Testis (tissue), 5 donors: ENCODE measurements at regions of chr19 and their contacts with region 1.

Region 1: GRCh38 chr19:11924886-11925650 is at the start of gene ZNF700:
- DNase-seq: peak; percentile 99
- H3K4me3 ChIP-seq: peak within 1 kb of the TSS; percentile 68 to 72
- H3K27ac ChIP-seq: peak within 1 kb of the TSS; percentile 90 to 91
- H3K4me1 ChIP-seq: peaks cover 21% of the 10 kb centered on the region
- H3K27me3 ChIP-seq: no peaks in the 10 kb centered on the region
- CTCF ChIP-seq: no peak
- POLR2A ChIP-seq: peak; percentile 68
- total RNA-seq, gene ZNF700: 22.0 to 26.1 TPM

Region 2: GRCh38 chr19:11987405-11988281 is 62.6 kb after region 1 on chr19:
- intact Hi-C with region 1: loop called (anchors 10 kb)
- DNase-seq: peak; percentile 98
- H3K4me3 ChIP-seq: peak overlapping the region; percentile 61 to 79
- H3K27ac ChIP-seq: peak overlapping the region; percentile 79 to 83
- H3K4me1 ChIP-seq: no peaks in the 10 kb centered on the region
- H3K27me3 ChIP-seq: no peaks in the 10 kb centered on the region
- CTCF ChIP-seq: no peak
- POLR2A ChIP-seq: peak; percentile 36